ENCODE measurements at regions of chr20 and their contacts with region 1.

Region 1: GRCh38 chr20:12198281-12198680 is 280.6 kb downstream of the BTBD3 start:
- DNase-seq: no peak
- H3K4me3 ChIP-seq: no peak overlapping the region
- H3K27ac ChIP-seq: no peak overlapping the region
- H3K4me1 ChIP-seq: no peaks in the 10 kb centered on the region
- H3K27me3 ChIP-seq: no peaks in the 10 kb centered on the region
- CTCF ChIP-seq: no peak

Region 2: GRCh38 chr20:12605751-12606150 is 407.5 kb after region 1 on chr20:
- CTCF ChIA-PET with region 1: no interaction called
- POLR2A ChIA-PET with region 1: interaction called, 10 read pairs
- intact Hi-C with region 1: no loop called
- DNase-seq: no peak
- H3K4me3 ChIP-seq: no peak overlapping the region
- H3K27ac ChIP-seq: no peak overlapping the region
- H3K4me1 ChIP-seq: no peaks in the 10 kb centered on the region
- H3K27me3 ChIP-seq: no peaks in the 10 kb centered on the region
- CTCF ChIP-seq: no peak

Region 3: GRCh38 chr20:12695937-12696336 is 497.7 kb after region 1 on chr20:
- CTCF ChIA-PET with region 1: no interaction called
- POLR2A ChIA-PET with region 1: no interaction called
- intact Hi-C with region 1: no loop called
- DNase-seq: no peak
- H3K4me3 ChIP-seq: no peak overlapping the region
- H3K27ac ChIP-seq: no peak overlapping the region
- H3K4me1 ChIP-seq: no peaks in the 10 kb centered on the region
- H3K27me3 ChIP-seq: no peaks in the 10 kb centered on the region
- CTCF ChIP-seq: no peak

Region 4: DNA sequence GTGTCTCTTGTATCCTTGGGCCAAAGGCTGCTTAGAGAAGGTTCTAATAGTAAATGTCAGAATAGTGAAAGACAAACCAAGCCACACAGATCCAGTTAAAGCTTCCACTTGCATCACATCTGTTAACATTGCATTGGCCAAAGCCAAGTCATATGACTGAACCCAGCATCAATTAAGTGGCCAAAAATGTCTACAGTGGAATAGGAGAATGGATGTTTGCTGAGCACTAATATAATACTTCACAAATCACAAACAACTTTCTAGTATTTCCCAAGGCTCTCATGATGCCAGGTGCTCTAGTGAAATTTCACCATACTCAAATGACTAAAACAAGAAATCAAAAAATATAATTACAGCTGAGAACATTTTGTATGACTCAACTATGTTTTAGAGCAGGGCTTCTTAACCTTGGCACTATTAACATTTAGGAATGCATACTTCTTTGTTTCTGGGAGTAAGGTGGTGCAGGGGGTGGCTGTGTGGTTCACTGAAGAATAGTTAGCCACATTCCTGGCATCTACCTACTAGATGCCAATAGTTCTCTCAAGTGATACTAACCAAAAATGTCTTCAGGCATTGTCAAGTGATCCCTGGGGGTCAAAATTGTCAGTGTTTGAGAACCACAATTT is 662.5 kb after region 1 on chr20:
- CTCF ChIA-PET with region 1: no interaction called
- POLR2A ChIA-PET with region 1: no interaction called
- intact Hi-C with region 1: no loop called
- DNase-seq: no peak
- H3K4me3 ChIP-seq: no peak overlapping the region
- H3K27ac ChIP-seq: no peak overlapping the region
- H3K4me1 ChIP-seq: no peaks in the 10 kb centered on the region
- H3K27me3 ChIP-seq: no peaks in the 10 kb centered on the region
- CTCF ChIP-seq: no peak

Measured in PC-9 (cell line).